CD4-positive, alpha-beta T cell (primary cell): ENCODE measurements at regions of chr15 and their contacts with region 1.

Region 1: DNA sequence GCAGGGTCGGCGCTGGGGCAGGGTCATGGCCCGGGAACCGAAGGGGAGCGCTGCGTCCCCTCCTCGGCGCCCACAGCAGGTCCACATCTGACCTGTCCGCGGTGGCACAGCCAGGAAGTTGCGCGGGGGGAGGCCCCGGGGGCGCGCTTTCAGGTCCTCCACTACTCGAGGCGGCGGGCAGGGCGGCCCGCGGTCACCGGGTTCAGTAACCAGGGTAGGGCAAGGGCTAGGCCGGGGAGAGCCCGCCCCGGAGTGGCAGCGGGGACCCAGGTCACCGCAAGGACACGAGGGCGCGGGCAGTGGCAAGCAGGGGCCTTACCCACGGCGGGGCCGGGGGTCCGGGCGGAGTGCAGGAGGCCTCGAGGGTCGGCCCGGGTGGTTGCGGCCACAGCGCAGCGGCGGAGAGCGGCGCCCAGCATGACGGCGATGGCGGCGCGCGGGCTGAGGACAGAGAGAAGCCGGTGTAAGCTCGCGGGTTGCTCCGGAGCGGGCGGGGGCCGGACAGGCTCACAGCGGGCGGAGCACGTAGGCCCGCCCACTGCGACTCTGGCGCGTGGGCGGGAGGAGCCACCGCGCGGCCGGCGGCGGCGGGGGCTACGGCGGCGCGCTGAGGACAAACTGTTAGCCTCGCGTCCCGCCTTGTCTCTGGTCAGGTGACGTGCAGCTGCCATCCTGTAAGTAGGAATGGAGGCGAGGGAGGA is at the start of gene COX5A:
- DNase-seq: peak; percentile 83 to 97 (median 88)
- ATAC-seq: peak; percentile 95
- H3K4me3 ChIP-seq: peak within 1 kb of the TSS; percentile 82
- H3K4me3 Mint-ChIP-seq: peak within 1 kb of the TSS; percentile 98
- H3K27ac ChIP-seq: peak within 1 kb of the TSS; percentile 58 to 74
- H3K27ac Mint-ChIP-seq: peak within 1 kb of the TSS; percentile 86
- H3K4me1 ChIP-seq: peaks cover 37% of the 10 kb centered on the region
- H3K4me1 Mint-ChIP-seq: peaks cover 28% of the 10 kb centered on the region
- H3K27me3 ChIP-seq: no peaks in the 10 kb centered on the region
- H3K27me3 Mint-ChIP-seq: no peaks in the 10 kb centered on the region
- CTCF ChIP-seq: no peak
- total RNA-seq, gene COX5A: 40.7 to 44.2 TPM

Region 2: GRCh38 chr15:73991726-73992593 is 945.8 kb before region 1 on chr15 and contains the start of gene STOML1:
- CTCF ChIA-PET with region 1: no interaction called
- POLR2A ChIA-PET with region 1: interaction called, 3 read pairs
- intact Hi-C with region 1: loop called in 1 of 2 experiments (anchors 10 kb)
- DNase-seq: peak; percentile 85 to 98 (median 94)
- ATAC-seq: peak; percentile 74
- H3K4me3 ChIP-seq: peak within 1 kb of the TSS; percentile 71
- H3K4me3 Mint-ChIP-seq: peak within 1 kb of the TSS; percentile 82
- H3K27ac ChIP-seq: peak within 1 kb of the TSS in 1 of 2 donors; percentile 47
- H3K27ac Mint-ChIP-seq: peak within 1 kb of the TSS; percentile 85
- H3K4me1 ChIP-seq: peaks cover 48% of the 10 kb centered on the region
- H3K4me1 Mint-ChIP-seq: peaks cover 51% of the 10 kb centered on the region
- H3K27me3 ChIP-seq: no peaks in the 10 kb centered on the region
- H3K27me3 Mint-ChIP-seq: no peaks in the 10 kb centered on the region
- CTCF ChIP-seq: peak; percentile 83
- total RNA-seq, gene STOML1: 4.6 to 5.3 TPM

Region 3: DNA sequence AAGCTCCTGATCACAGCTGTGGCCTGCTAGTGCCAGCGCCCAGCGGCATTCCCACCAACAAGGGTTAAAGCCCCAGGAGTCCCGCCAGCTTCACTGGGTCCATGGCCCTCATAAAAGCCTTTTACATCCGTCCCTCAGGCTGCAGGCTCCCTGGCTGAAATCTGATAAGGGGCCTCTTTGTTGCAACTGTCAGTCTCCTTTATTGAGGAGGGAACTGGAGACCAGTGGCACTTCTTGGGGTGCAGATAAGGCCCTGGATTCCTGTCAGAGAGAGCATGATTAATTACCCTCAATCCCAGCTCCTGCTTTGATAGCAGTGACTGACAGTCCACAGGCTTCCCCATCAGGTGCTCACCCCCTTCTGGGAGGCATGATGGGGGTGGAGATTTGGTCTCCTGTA is 353.0 kb before region 1 on chr15:
- CTCF ChIA-PET with region 1: no interaction called
- POLR2A ChIA-PET with region 1: no interaction called
- intact Hi-C with region 1: no loop called
- DNase-seq: no peak
- ATAC-seq: no peak
- H3K4me3 ChIP-seq: no peak overlapping the region
- H3K4me3 Mint-ChIP-seq: no peak overlapping the region
- H3K27ac ChIP-seq: no peak overlapping the region
- H3K27ac Mint-ChIP-seq: peak overlapping the region; percentile 30
- H3K4me1 ChIP-seq: no peaks in the 10 kb centered on the region
- H3K4me1 Mint-ChIP-seq: no peaks in the 10 kb centered on the region
- H3K27me3 ChIP-seq: no peaks in the 10 kb centered on the region
- H3K27me3 Mint-ChIP-seq: no peaks in the 10 kb centered on the region
- CTCF ChIP-seq: no peak

Region 4: GRCh38 chr15:74615508-74616365 is 322.0 kb before region 1 on chr15 and contains the start of gene CLK3:
- CTCF ChIA-PET with region 1: no interaction called
- POLR2A ChIA-PET with region 1: interaction called, 12 read pairs
- intact Hi-C with region 1: loop called in 1 of 2 experiments (anchors 2 kb)
- DNase-seq: peak; percentile 92 to 99 (median 97)
- ATAC-seq: peak; percentile 70
- H3K4me3 ChIP-seq: peak within 1 kb of the TSS; percentile 100
- H3K4me3 Mint-ChIP-seq: peak within 1 kb of the TSS; percentile 94
- H3K27ac ChIP-seq: peak within 1 kb of the TSS; percentile 95 to 98
- H3K27ac Mint-ChIP-seq: peak within 1 kb of the TSS; percentile 99
- H3K4me1 ChIP-seq: peaks cover 63% of the 10 kb centered on the region
- H3K4me1 Mint-ChIP-seq: peaks cover 42% of the 10 kb centered on the region
- H3K27me3 ChIP-seq: no peaks in the 10 kb centered on the region
- H3K27me3 Mint-ChIP-seq: no peaks in the 10 kb centered on the region
- CTCF ChIP-seq: no peak
- total RNA-seq, gene CLK3: 275 to 293 TPM

Region 5: DNA sequence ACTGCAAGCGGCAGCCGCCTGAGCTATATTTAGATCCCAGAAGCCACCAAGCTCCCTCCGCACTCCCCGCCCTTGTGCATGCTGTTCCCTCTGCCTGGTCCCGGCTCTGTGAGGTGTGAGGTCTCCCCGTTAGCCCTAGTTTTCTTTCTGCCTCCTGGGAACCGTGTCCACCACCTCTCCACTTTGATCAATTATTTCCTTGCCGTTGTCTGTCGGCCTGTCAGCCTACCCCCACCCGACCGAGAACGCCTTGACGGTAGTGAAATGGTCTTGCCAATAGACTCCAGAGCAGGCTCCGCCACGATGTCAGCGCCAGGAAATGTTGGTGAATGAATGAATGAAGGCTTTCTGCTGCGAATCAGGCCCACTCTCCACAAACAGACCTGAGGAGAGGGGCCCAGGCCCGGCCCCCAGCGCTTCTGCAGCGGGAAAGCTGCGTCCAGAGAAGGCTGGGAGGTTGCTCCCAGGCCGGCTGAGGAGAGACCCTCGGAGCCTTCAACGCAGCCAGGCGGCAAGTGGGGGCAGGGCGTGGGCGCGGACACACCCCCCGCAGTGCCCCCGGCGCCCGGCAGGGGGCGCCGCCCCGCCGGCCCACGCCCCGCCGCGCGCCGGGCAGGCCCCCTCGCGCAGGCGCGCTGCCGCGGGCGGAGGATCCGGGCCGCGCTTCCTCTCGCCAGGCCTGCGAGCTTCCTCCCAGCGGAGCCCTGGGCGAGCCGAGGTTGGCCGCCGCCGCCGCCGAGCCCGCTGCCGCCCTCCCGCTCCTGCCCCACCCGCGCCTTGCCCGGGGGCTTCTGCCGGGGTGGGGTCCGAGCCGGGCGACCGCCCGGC is 156.1 kb before region 1 on chr15 and contains the start of gene CSK:
- CTCF ChIA-PET with region 1: interaction called, 5 read pairs
- POLR2A ChIA-PET with region 1: interaction called, 5 read pairs
- intact Hi-C with region 1: loop called in 1 of 2 experiments (anchors 5 kb)
- DNase-seq: peak; percentile 59 to 94 (median 80)
- ATAC-seq: peak; percentile 59
- H3K4me3 ChIP-seq: peak within 1 kb of the TSS; percentile 100
- H3K4me3 Mint-ChIP-seq: peak within 1 kb of the TSS; percentile 90
- H3K27ac ChIP-seq: peak within 1 kb of the TSS; percentile 84 to 93
- H3K27ac Mint-ChIP-seq: peak within 1 kb of the TSS; percentile 94
- H3K4me1 ChIP-seq: peaks cover 88% of the 10 kb centered on the region
- H3K4me1 Mint-ChIP-seq: peaks cover 65% of the 10 kb centered on the region
- H3K27me3 ChIP-seq: no peaks in the 10 kb centered on the region
- H3K27me3 Mint-ChIP-seq: no peaks in the 10 kb centered on the region
- CTCF ChIP-seq: peak; percentile 59
- total RNA-seq, gene CSK: 114 to 118 TPM

Region 6: GRCh38 chr15:74889883-74890664 is 47.7 kb before region 1 on chr15 and contains the start of gene MPI:
- CTCF ChIA-PET with region 1: no interaction called
- POLR2A ChIA-PET with region 1: interaction called, 4 read pairs
- intact Hi-C with region 1: loop called in 1 of 2 experiments (anchors 5 kb)
- DNase-seq: peak; percentile 70 to 90 (median 78)
- ATAC-seq: peak; percentile 92
- H3K4me3 ChIP-seq: peak within 1 kb of the TSS; percentile 92
- H3K4me3 Mint-ChIP-seq: peak within 1 kb of the TSS; percentile 88
- H3K27ac ChIP-seq: peak within 1 kb of the TSS; percentile 71 to 89
- H3K27ac Mint-ChIP-seq: peak within 1 kb of the TSS; percentile 86
- H3K4me1 ChIP-seq: peaks cover 56% of the 10 kb centered on the region
- H3K4me1 Mint-ChIP-seq: peaks cover 43% of the 10 kb centered on the region
- H3K27me3 ChIP-seq: no peaks in the 10 kb centered on the region
- H3K27me3 Mint-ChIP-seq: no peaks in the 10 kb centered on the region
- CTCF ChIP-seq: no peak
- total RNA-seq, gene MPI: 28.9 to 30.3 TPM

Region 7: DNA sequence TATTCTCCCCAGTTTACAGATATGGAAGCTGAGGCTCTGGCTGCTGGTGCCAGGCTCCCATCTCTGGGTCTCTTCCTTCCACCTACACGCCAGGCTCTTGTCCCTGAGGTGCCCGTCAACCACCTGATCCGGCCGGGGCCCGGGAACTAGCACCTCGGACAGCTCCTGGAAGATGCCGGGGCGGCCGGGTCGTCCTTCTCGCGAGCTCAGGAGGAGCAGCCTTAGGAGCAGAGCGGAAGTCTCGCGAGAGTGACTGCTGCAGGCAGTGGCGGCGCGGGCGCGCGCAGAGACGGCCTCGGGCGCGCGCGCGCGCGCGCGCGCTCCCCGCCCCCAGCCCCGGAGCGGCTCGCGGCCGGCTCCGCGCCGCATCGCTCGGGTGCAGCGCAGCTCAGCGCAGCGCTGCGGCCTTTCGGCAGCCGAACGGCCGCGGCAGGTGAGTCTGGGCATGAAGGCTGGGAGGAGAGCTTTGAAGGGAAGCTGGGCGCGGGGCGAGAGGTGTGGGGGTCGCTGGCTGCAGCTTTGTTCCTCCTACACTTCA is 57.6 kb after region 1 on chr15 and contains the start of gene SCAMP5:
- CTCF ChIA-PET with region 1: no interaction called
- POLR2A ChIA-PET with region 1: no interaction called
- intact Hi-C with region 1: loop called in 1 of 2 experiments (anchors 5 kb)
- DNase-seq: peak; percentile 82 to 96 (median 88)
- ATAC-seq: peak; percentile 99
- H3K4me3 ChIP-seq: peak within 1 kb of the TSS; percentile 75
- H3K4me3 Mint-ChIP-seq: peak within 1 kb of the TSS; percentile 93
- H3K27ac ChIP-seq: no peak within 1 kb of the TSS
- H3K27ac Mint-ChIP-seq: peak within 1 kb of the TSS; percentile 21
- H3K4me1 ChIP-seq: peaks cover 16% of the 10 kb centered on the region
- H3K4me1 Mint-ChIP-seq: peaks cover 22% of the 10 kb centered on the region
- H3K27me3 ChIP-seq: peaks cover 24 to 26% of the 10 kb centered on the region in 2 experiments
- H3K27me3 Mint-ChIP-seq: peaks cover 28% of the 10 kb centered on the region
- CTCF ChIP-seq: no peak
- total RNA-seq, gene SCAMP5: 5.7 to 6.4 TPM

Region 8: GRCh38 chr15:75625542-75626347 is 688.0 kb after region 1 on chr15 and contains the start of gene SNUPN:
- CTCF ChIA-PET with region 1: no interaction called
- POLR2A ChIA-PET with region 1: no interaction called
- intact Hi-C with region 1: loop called in 1 of 2 experiments (anchors 10 kb)
- DNase-seq: peak; percentile 86 to 97 (median 92)
- ATAC-seq: peak; percentile 92
- H3K4me3 ChIP-seq: peak within 1 kb of the TSS; percentile 100
- H3K4me3 Mint-ChIP-seq: peak within 1 kb of the TSS; percentile 92
- H3K27ac ChIP-seq: peak within 1 kb of the TSS; percentile 95
- H3K27ac Mint-ChIP-seq: peak within 1 kb of the TSS; percentile 90
- H3K4me1 ChIP-seq: peaks cover 31% of the 10 kb centered on the region
- H3K4me1 Mint-ChIP-seq: peaks cover 29% of the 10 kb centered on the region
- H3K27me3 ChIP-seq: no peaks in the 10 kb centered on the region
- H3K27me3 Mint-ChIP-seq: no peaks in the 10 kb centered on the region
- CTCF ChIP-seq: no peak
- total RNA-seq, gene SNUPN: 10.0 to 11.6 TPM